Activated naive CD4-positive, alpha-beta T cell treated with anti-CD3 and anti-CD28 coated beads for 36 hours (primary cell): ENCODE measurements at regions of chr11 and their contacts with region 1.

Region 1: DNA sequence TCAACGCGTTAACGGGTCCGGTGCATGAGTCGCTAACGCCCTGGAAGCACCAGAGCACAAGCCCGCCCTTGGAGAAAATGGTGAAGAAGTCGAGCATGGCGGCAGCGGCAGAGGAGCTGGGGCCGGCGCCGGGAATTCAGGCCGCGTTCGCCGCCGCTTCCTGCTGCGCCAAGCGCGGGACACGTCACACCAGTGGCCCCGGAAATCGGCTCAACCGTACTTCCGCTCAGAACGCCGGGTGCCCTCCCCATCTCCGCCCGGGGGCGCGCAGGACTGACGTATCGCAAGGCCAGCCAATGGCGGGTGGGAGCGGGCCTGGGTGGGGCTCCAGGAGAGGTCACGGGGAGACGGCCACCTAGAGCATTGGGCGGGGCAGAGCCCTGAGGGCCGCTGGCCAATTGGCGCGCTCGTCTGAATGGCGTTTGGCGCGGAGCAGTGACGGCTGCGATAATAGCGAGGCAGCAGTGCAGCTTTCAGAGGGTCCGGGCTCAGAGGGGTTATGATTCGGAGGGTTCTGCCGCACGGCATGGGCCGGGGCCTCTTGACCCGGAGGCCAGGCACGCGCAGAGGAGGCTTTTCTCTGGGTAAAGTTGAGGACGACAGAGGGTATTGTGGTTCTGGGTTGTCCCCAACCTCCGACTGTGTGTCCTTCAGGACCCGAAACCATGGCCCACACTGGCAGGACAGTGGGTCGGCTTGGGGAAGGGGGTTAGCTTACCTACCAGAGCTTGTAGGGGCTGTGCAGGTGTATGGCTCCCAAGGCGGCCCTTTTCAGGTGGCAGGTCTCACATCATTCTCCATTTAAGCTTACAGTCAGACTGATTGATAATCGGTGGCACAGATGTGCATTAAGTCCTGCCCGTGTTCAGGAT is at the starts of genes FOXRED1 and SRPRA:
- DNase-seq: peak; percentile 100
- H3K4me3 Mint-ChIP-seq: peak within 1 kb of the TSS; percentile 93
- H3K27ac Mint-ChIP-seq: peak within 1 kb of the TSS; percentile 95
- H3K4me1 Mint-ChIP-seq: peaks cover 33% of the 10 kb centered on the region
- H3K27me3 Mint-ChIP-seq: no peaks in the 10 kb centered on the region
- total RNA-seq, gene FOXRED1: 41.2 to 48.6 TPM
- total RNA-seq, gene SRPRA: 137 to 142 TPM

Region 2: DNA sequence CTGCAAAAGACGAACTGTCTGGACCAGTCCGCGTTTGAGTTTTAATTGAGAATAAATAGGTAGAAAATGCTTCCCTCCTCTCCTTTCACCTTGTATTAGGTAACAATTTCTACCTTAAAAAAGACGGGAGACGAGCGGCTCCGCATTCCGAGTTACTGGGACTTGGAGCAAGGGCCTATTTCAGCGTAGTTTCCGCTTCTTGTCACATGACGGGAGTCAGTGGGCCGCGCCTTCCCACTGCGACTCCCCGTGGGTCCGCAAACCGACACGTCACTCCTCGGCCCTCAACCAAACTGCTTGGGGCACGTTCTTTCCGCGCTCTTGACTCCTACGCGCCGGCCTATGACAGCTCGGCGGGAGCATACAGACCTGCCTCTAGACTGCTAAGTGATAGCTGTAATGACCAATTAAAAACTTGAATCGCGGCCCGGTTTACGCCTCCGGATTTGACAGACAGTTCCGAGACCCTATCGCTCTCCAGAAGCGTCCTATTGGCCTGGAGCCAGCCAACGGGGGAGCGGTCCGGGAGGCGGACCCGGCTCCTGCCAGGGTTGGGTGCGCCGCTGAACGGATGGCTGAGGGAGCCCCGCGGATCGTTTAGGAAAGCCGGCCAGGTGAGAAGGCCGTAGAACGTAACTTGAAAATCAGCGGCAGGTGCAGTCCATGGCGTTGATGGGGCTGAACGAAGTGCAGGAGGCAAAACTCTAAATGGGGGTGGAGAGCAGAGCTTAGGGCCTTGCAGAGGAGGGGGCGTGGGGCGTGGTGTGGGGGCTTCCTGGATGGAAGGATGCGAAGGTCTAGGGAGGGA is 676.4 kb before region 1 on chr11 and contains the start of gene STT3A:
- CTCF ChIA-PET with region 1: no interaction called
- intact Hi-C with region 1: loop called (anchors 1 kb)
- DNase-seq: peak; percentile 99
- H3K4me3 Mint-ChIP-seq: peak within 1 kb of the TSS; percentile 100
- H3K27ac Mint-ChIP-seq: peak within 1 kb of the TSS; percentile 92
- H3K4me1 Mint-ChIP-seq: peaks cover 51% of the 10 kb centered on the region
- H3K27me3 Mint-ChIP-seq: no peaks in the 10 kb centered on the region
- total RNA-seq, gene STT3A: 111 to 113 TPM

Region 3: DNA sequence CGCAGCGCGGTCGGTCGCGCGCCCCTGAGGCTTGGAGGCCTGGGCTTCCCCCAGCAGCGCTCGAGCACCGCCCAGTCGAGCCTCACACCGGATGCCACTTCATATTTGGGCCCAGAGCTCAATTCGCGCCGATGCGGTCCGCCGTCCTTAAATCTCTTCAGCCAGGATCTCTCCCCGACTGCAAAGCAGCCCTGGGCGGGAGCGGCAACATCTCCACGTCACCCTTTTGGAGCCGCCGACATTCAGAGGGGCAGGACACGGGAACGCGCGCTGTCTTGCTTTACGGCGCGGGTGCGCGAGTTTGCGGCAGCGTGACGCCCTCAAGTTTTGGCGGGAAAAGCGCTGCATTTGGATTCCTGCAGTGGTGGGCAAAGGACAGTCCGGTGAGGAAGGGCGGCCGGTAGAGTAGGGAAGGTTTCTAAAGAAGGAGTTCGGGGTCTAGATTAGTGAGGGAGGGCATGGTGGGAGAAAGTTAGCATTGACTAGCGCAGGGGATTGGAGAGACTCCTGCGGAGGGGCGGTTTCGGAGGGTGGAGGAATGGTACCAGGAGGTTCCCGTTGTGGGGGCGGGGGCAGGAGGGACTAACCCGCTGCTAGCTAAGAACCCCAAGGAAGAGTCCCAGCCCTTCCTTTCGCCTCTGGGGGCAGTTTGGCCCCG is 643.2 kb before region 1 on chr11:
- CTCF ChIA-PET with region 1: no interaction called
- intact Hi-C with region 1: loop called (anchors 5 kb)
- DNase-seq: peak; percentile 90
- H3K4me3 Mint-ChIP-seq: peak overlapping the region; percentile 89
- H3K27ac Mint-ChIP-seq: peak overlapping the region; percentile 99
- H3K4me1 Mint-ChIP-seq: peaks cover 21% of the 10 kb centered on the region
- H3K27me3 Mint-ChIP-seq: no peaks in the 10 kb centered on the region

Region 4: DNA sequence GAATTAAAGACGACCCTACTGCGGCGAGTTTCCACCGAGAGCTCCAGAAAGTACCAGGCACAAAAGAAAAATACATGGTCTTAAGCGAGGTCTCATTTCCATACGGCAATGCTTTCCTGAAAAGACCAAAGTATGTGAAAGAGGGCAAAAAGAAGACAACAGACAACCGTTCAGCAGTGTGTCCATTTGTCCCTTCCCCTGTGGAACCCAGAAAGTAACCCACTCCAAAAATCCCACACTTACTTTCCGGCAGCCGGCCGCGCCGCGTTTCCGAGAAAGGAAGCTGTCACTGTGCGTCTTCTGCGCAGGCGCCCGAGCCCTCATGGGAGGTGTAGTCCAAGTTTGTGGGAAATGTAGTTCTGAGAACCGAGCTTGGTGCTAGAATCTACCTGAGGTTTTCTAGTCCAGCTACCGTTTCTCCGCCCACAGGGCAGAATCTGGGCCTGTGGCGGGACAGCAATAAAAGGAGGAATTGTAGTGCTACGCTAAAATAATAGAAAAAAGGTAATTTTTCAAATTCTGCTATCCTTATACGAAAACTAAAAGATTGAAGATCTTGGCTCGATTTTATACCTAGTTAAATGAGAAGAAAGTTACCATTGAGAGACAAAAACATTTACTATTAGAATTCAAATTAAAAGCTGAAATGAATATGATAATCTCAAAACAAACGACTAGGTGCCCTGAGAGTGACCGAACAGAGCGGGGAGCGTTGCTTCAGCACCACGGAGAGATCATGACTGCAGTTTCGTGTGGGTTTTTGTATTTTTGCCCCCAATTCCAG is 365.8 kb before region 1 on chr11 and contains the start of gene PUS3:
- CTCF ChIA-PET with region 1: no interaction called
- intact Hi-C with region 1: loop called (anchors 1 kb)
- DNase-seq: peak; percentile 93
- H3K4me3 Mint-ChIP-seq: peak within 1 kb of the TSS; percentile 94
- H3K27ac Mint-ChIP-seq: peak within 1 kb of the TSS; percentile 95
- H3K4me1 Mint-ChIP-seq: peaks cover 37% of the 10 kb centered on the region
- H3K27me3 Mint-ChIP-seq: peaks cover 22% of the 10 kb centered on the region
- total RNA-seq, gene PUS3: 14.9 to 18.5 TPM

Region 5: DNA sequence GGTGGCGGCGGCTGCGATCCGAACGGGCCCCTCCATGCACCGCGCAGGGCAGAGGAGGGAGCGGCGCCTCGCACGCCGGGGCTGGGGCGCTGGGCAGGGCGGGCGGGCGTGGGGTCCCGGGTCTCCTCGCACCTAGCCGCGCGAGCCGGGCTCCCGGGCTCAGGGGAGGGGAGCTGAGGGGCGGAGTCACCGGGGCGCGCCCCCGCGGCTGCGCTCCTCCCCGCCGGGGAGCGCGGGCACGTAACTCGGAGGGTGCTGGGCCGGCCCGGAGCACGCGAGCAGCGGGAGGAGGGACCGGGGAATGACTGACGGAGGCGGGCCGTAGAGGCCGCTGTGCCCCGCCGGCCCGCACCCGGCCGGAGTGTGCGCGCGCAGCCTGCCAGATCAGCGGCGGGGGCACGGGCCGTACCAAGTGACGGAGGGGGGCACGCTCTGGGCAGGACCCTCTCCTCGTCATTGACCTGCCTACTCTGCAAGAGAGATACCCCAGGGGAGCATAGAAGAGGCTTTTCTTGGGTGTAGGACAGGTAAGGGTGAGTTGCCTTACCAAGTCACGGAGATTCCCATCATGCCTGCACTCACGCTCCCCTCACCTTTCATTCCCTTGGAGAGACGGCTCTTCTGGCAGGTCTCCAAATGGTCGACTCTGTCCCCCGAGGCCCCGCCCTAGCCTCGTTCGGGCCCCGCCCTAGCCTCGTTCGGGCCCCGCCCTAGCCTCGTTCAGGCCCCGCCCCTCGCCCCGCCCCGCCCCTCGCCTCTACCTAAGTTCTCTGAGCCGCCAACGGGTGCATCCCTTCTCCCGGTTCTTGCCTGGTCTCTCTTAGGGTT is 206.1 kb before region 1 on chr11 and contains the start of gene CDON:
- CTCF ChIA-PET with region 1: no interaction called
- intact Hi-C with region 1: loop called (anchors 1 kb)
- DNase-seq: peak; percentile 92
- H3K4me3 Mint-ChIP-seq: peak within 1 kb of the TSS; percentile 77
- H3K27ac Mint-ChIP-seq: peak within 1 kb of the TSS; percentile 92
- H3K4me1 Mint-ChIP-seq: peaks cover 5% of the 10 kb centered on the region
- H3K27me3 Mint-ChIP-seq: peaks cover 17% of the 10 kb centered on the region
- total RNA-seq, gene CDON: 2.6 to 3.5 TPM

Region 6: DNA sequence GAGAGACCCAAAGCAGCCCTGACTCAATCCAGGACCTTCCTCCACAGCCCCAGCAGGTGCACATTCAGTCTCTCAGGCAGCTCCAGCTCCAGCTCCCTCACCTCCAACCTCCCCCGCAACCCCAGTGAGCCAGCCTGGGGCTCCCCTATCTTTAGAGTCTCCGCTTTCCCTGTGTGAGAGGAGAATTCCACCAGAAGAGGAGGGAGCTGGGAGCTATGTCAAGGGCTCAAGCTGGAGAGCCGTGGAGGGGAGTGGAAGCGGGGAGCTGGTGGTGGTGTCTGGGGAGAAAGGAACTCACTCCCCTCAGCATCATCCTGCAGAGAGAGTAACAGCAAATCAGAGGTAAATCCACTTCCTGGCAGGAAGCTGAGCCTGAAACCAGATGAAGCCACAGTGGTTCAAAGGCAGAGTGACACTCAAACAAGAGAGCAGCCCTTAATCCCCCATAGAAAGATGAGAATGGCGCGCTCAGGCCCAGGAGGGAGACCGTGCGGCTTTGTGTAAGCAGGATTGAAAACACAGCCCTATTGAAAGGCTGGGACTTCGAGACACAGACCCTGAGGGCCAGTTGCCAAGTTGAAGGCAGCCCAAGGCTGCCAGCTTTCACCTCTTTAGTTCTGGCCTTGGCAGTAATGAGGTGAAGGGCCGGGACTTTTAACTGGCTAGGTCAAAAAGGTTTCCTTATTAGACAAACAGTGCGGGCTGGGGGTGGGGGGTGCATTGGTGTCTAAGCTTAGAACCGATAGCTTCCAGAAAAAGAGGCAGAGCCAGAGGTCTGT is 184.9 kb before region 1 on chr11:
- CTCF ChIA-PET with region 1: no interaction called
- intact Hi-C with region 1: no loop called
- DNase-seq: peak; percentile 68
- H3K4me3 Mint-ChIP-seq: peak overlapping the region; percentile 16
- H3K27ac Mint-ChIP-seq: peak overlapping the region; percentile 74
- H3K4me1 Mint-ChIP-seq: peaks cover 26% of the 10 kb centered on the region
- H3K27me3 Mint-ChIP-seq: no peaks in the 10 kb centered on the region

Region 7: GRCh38 chr11:126303623-126304456 is 34.9 kb after region 1 on chr11 and contains the start of gene DCPS:
- CTCF ChIA-PET with region 1: no interaction called
- intact Hi-C with region 1: loop called (anchors 1 kb)
- DNase-seq: peak; percentile 86
- H3K4me3 Mint-ChIP-seq: peak within 1 kb of the TSS; percentile 95
- H3K27ac Mint-ChIP-seq: peak within 1 kb of the TSS; percentile 97
- H3K4me1 Mint-ChIP-seq: peaks cover 35% of the 10 kb centered on the region
- H3K27me3 Mint-ChIP-seq: no peaks in the 10 kb centered on the region
- total RNA-seq, gene DCPS: 34.9 to 39.5 TPM

Region 8: GRCh38 chr11:126403658-126404057 is 134.7 kb after region 1 on chr11:
- CTCF ChIA-PET with region 1: no interaction called
- intact Hi-C with region 1: no loop called
- DNase-seq: no peak
- H3K4me3 Mint-ChIP-seq: no peak overlapping the region
- H3K27ac Mint-ChIP-seq: no peak overlapping the region
- H3K4me1 Mint-ChIP-seq: no peaks in the 10 kb centered on the region
- H3K27me3 Mint-ChIP-seq: no peaks in the 10 kb centered on the region